Left cardiac atrium (tissue), 4 donors: ENCODE measurements at regions of chr4 and their contacts with region 1.

Region 1: DNA sequence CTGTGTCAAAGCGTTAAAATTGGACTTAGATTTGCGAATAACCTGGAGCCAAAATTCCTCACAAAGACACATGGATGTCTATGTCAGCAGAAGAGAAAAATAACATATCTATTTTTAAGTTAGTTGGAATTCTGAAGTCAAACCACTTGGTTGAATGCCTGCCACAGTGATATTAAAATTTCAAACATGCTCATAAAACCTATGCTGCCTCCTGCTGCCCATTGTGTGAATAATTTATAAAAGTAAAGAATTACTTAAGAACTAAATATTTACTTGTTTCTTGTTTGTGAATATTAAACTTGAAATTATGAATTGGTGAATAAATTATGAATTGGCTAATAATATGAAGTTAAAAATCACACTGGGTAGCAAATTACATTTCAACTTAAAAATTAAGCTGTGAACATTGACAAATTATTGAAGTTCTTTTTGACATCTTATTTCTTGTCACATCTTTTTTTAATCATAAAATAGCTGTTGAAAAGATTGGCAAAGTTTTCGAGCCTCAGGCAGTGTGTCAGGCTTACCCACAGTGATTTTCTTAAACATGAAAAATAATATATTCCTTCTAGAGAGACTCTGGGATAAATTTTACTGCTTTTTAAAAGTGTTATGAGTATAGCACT is 35.4 kb downstream of the FABP2 start:
- DNase-seq: no peak
- ATAC-seq: peak; percentile 44 to 64

Region 2: DNA sequence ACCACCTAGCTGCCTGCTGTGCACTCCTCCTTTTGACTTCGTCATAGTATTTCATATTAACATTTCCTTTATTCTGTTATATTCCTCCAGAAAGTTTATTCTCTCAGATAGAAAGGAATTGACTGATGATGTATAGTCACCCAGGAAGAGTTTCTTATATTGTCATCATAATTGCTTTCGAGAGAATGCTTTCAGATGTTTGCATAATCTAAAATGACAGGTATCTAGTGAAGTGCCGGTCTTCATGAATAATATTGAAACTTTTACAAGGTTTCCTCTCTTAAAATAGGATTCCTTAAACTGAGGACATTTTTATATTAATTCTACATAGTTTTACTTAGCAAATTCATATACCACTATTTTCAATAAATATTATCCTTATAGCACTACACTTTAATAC is 460.7 kb before region 1 on chr4:
- intact Hi-C with region 1: no loop called
- DNase-seq: no peak
- ATAC-seq: no peak

Region 3: GRCh38 chr4:118981839-118982381 is 304.6 kb before region 1 on chr4:
- intact Hi-C with region 1: loop called in 1 of 2 experiments (anchors 2 kb)
- DNase-seq: peak; percentile 60
- ATAC-seq: peak; percentile 84 to 89

Region 4: GRCh38 chr4:119041951-119042560 is 244.4 kb before region 1 on chr4:
- intact Hi-C with region 1: loop called in 1 of 2 experiments (anchors 5 kb)
- DNase-seq: peak; percentile 34
- ATAC-seq: peak; percentile 65 to 77

Region 5: DNA sequence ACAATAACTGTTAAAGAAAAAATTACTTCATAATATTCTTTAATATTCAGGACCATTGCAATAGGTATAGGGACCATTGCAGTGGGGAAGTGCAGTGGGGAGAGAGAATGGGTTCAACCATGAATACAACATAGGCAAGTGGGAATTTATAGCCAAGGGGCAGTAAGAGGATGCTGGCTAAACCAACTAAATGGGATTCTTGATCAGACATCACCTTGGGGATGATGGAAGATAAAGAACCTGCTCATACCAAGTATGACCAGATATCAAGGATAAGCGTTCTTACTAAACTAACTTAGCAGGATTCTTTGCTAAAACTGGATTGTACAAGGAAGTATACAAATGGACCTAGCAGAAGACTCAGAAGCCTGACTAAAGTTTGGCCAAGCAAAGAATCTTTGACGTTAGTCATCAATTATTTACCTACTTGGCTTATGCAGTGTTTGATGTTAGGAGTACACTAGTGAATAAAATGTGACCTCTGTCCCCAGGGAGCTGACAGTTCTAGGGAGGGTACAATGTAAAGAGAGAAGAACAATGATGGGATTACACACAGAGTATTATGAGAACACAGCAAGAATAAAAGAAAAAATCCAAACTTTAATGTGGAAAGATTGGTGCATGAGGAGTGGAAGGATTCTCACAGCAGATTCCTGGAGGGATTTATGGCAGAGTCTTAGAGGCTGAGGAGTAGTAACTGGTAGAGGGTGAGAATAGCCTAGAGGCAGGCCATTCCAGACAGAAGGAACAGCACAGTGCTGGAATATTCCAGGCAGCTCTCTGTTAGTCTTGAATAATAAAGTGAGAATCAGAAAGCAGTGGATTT is 205.6 kb before region 1 on chr4:
- intact Hi-C with region 1: no loop called
- DNase-seq: no peak
- ATAC-seq: no peak

Region 6: GRCh38 chr4:119099227-119099801 is 187.2 kb before region 1 on chr4:
- intact Hi-C with region 1: loop called in 1 of 2 experiments (anchors 10 kb)
- DNase-seq: no peak
- ATAC-seq: peak in 1 of 2 donors; percentile 32

Region 7: DNA sequence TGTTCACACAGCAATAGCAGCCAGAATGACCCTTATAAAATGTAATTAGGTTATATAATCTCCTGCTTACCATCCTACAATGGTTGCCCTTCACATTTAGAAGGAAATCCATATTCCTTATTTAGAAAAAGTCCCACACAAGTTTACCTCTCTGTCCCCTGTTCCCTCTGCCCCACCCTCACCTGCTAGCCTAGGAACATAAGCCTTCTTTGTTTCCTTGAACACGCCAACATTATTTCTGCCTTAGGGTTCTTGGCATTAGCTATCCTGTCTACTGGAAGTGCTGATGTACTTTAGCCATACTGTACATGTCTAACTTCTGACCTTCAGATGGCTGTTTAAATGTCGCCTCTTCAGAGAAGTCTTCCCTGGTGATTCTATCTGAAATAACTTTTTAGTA is 102.4 kb before region 1 on chr4:
- intact Hi-C with region 1: no loop called
- DNase-seq: no peak
- ATAC-seq: no peak

Region 8: GRCh38 chr4:119197772-119198212 is 88.7 kb before region 1 on chr4:
- intact Hi-C with region 1: no loop called
- DNase-seq: no peak
- ATAC-seq: no peak

Region 9: DNA sequence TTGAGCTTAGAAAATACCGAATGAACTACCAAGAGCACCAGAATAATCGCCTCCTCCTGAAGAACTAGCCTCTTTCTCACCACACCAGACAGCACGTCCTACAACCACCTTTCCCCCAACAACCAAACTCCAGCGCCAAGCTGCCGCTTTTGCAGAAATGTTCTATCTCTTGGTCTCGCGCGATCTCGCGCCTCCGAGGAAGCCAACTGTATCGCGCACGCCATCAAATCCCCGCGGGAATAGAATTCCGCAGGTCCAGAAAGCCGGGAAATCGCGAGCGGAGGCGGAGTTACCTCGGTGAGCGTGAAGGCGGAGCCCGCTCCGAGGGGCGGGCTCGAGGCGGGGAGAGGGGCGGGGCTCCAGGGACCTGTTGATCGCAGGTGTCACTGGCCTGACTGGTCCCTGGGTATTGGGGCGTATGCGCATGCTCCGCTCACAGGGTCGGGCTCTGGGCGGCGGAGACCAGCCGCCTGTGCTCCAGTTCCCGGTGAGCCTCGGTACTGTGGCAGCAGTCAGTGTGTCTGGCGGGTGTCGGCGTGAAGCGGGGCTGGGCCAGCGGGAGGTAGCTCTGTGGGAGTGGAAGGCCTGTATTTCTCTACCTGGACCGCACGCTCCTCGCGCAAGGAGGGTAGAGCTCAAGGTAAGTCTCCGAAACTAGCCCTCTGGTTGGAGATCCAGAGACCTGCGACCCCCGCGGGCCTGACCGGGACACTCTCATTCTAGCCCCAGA is 74.1 kb before region 1 on chr4 and contains the start of gene USP53:
- intact Hi-C with region 1: loop called in 1 of 2 experiments (anchors 10 kb)
- DNase-seq: peak; percentile 97
- ATAC-seq: peak; percentile 98
- total RNA-seq, gene USP53: 36.1 to 43.0 TPM